ENCODE measurements at regions of chr22 and their contacts with region 1.

Region 1: GRCh38 chr22:20803696-20804324 is 29.9 kb downstream of the SERPIND1 start:
- DNase-seq: peak; percentile 71
- H3K4me3 ChIP-seq: peak overlapping the region in 1 of 2 experiments; percentile 39; a peak in 1 of 4 replicates
- H3K27ac ChIP-seq: no peak overlapping the region
- H3K4me1 ChIP-seq: peaks cover 8 to 17% of the 10 kb centered on the region in 2 experiments; a peak in 2 of 4 replicates
- H3K27me3 ChIP-seq: no peaks in the 10 kb centered on the region
- CTCF ChIP-seq: peak; percentile 65
- EP300 ChIP-seq: no peak
- RAD21 ChIP-seq: peak; percentile 81

Region 2: DNA sequence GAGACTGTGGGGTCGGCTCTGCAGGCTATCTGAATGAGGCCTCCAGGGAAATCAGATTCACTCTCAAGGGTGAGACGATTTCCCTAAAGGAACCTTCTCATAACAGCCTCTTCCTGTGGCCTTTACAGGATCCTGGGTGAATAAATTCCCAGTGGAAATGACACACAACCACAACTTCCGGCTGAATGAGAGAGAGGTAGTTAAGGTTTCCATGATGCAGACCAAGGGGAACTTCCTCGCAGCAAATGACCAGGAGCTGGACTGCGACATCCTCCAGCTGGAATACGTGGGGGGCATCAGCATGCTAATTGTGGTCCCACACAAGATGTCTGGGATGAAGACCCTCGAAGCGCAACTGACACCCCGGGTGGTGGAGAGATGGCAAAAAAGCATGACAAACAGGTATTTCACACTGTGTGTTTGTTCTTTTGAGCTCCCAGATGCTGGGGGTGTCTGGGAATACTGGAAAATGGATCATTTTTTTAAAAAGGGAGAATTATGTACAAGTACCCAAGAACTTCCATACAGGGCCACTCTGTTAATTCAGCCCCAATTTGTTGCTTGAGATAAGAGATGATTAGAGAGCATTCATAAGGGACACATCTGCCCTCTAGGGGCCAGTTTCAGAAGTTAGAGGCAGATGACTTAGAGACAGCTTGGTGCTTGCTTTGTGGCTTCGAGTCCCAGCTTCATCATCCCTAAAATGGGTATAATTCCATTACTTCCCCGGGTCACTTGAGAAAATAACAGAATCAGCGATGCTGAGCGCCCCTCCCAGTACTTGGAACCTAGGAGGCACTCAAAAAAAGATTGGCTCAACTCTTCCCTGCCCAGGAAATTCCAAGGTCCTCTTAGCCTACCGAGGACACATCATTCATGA is 19.7 kb before region 1 on chr22:
- CTCF ChIA-PET with region 1: interaction called, 43 read pairs
- POLR2A ChIA-PET with region 1: no interaction called
- DNase-seq: peak; percentile 59
- H3K4me3 ChIP-seq: no peak overlapping the region
- H3K27ac ChIP-seq: no peak overlapping the region
- H3K4me1 ChIP-seq: no peaks in the 10 kb centered on the region
- H3K27me3 ChIP-seq: no peaks in the 10 kb centered on the region
- CTCF ChIP-seq: peak; percentile 78
- EP300 ChIP-seq: no peak
- RAD21 ChIP-seq: peak; percentile 53

Region 3: DNA sequence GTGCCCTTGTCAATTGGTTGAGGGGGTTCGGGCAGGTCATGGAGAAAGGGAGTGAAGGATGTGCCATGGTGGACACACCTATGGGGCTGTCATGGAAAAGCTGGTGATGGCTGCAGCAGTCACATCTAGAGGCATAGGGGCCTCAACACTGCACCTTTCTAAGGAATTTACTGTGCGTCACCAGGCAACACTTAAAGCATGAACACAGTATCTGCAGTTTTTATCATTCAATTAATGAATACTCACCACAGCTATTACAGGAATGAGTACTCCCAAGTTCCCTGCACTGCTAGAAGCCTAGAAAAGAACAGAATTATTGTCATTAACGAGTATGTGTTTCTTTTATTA is 10.9 kb before region 1 on chr22:
- CTCF ChIA-PET with region 1: interaction called, 10 read pairs
- POLR2A ChIA-PET with region 1: no interaction called
- DNase-seq: no peak
- H3K4me3 ChIP-seq: no peak overlapping the region
- H3K27ac ChIP-seq: peak overlapping the region in 1 of 2 experiments; percentile 63; a peak in 2 of 4 replicates
- H3K4me1 ChIP-seq: no peaks in the 10 kb centered on the region; a peak in 1 of 4 replicates
- H3K27me3 ChIP-seq: no peaks in the 10 kb centered on the region
- CTCF ChIP-seq: no peak
- EP300 ChIP-seq: no peak
- RAD21 ChIP-seq: no peak

Region 4: GRCh38 chr22:20823264-20823663 is 19.5 kb after region 1 on chr22:
- CTCF ChIA-PET with region 1: interaction called, 10 read pairs
- POLR2A ChIA-PET with region 1: no interaction called
- DNase-seq: no peak
- H3K4me3 ChIP-seq: no peak overlapping the region
- H3K27ac ChIP-seq: no peak overlapping the region
- H3K4me1 ChIP-seq: no peaks in the 10 kb centered on the region; a peak in 1 of 4 replicates
- H3K27me3 ChIP-seq: no peaks in the 10 kb centered on the region
- CTCF ChIP-seq: no peak
- EP300 ChIP-seq: no peak
- RAD21 ChIP-seq: no peak

Region 5: DNA sequence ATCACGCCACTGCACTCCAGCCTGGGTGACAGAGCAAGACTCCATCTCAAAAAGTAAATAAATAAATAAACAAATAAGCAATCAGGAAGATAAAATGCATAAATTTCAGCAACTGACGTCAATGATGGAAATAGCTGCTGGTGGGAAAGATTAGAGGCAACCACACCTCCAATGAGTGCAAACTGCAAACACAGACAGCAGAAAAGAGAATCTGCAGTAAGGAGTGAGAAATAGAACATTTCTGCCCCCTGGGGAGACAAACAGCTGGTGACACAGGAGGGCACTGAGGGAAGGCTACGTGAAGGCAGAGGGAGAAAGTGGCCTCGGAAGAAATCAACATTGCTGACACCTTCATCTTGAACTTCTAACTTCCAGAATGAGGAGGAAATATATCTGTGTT is 48.3 kb after region 1 on chr22:
- CTCF ChIA-PET with region 1: interaction called, 26 read pairs
- POLR2A ChIA-PET with region 1: no interaction called
- DNase-seq: no peak
- H3K4me3 ChIP-seq: no peak overlapping the region
- H3K27ac ChIP-seq: no peak overlapping the region
- H3K4me1 ChIP-seq: peaks cover 5 to 7% of the 10 kb centered on the region in 2 experiments; a peak in 2 of 4 replicates
- H3K27me3 ChIP-seq: no peaks in the 10 kb centered on the region
- CTCF ChIP-seq: no peak
- EP300 ChIP-seq: no peak
- RAD21 ChIP-seq: peak; percentile 38

Measured in SK-N-SH (cell line).